Upper lobe of right lung (tissue), 1 donor: ENCODE measurements at regions of chr1 and their contacts with region 1.

Region 1: GRCh38 chr1:157090196-157090647 is 9.4 kb downstream of the ETV3L start:
- DNase-seq: peak; percentile 90
- ATAC-seq: peak; percentile 94
- H3K4me3 ChIP-seq: no peak overlapping the region
- H3K27ac ChIP-seq: no peak overlapping the region
- H3K4me1 ChIP-seq: peaks cover 7% of the 10 kb centered on the region
- H3K27me3 ChIP-seq: no peaks in the 10 kb centered on the region
- CTCF ChIP-seq: peak; percentile 97

Region 2: DNA sequence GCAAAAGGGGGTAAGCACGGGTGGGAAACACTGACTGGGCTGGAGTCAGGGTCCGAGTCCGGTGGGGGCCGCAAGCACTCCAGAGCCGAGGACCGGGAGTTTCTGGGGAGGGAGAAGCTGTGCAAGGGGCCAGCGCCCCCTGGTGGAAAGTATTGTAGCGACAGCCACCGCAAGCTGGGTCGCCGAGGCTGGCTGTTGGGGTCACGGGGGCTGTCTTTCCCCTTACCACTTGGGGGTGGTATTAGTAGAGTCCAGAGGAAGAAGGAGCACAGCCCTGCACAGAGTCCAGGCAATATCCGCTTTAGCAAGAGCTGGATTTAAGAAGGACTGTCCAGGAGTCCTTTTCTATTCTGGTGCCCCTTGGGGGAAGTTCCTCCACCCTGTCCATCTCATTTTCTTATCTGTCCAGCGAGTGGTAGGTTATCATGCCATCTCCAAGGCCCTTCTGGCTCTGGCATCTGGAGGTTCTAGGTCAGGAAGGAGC is 65.9 kb after region 1 on chr1:
- intact Hi-C with region 1: loop called (anchors 2 kb)
- DNase-seq: peak; percentile 84
- ATAC-seq: peak; percentile 83
- H3K4me3 ChIP-seq: no peak overlapping the region
- H3K27ac ChIP-seq: no peak overlapping the region
- H3K4me1 ChIP-seq: peaks cover 28% of the 10 kb centered on the region
- H3K27me3 ChIP-seq: no peaks in the 10 kb centered on the region
- CTCF ChIP-seq: peak; percentile 94